Thyroid gland (tissue), 4 donors: ENCODE measurements at regions of chr20 and their contacts with region 1.

Region 1: DNA sequence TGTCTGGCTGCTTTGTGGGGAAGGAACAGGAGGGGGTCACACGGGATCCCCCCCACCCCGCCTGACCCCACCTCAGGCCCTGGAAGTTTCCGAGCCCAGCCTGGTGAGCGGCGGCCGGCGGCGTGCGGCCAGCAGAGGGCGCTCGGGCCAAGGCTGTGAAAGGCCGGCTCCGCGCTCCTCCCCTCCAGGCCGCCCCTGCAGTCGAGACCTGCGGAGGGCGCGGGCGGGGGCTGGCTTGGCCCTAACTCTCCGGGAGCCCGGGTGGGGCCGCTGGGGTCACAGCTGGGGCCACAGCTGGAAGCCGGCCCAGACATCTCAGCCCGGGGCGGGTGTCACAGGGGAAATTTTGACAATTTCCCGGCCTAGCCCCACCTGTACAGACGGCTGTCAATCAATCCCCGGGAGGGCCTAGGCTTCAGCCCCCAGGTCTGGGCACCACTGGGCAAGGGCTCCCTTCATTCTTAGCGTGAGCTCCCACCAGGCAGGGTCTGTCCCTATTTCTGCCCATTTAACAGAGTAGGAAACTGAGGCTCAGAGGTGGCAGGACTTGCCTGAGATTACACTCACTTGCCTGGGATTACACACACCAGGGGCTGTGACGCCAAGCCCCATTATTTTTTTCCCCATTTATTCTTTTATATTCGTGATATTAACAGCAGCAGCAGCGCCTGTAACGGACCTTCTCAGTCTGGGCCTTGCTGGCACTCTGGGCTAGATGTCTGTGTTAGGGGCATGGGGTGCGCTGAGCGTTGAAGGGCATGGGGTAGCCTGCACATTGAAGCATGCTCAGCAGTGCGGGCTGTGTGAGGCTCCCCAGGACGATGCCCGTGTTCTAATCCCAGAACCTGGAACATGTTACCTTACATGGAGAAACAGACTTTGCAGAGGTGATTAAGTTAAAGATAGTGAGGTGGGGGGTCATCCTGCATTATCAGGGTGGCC is 23.0 kb downstream of the ZBP1 start:
- DNase-seq: peak; percentile 63 to 68
- H3K4me3 ChIP-seq: no peak overlapping the region
- H3K27ac ChIP-seq: no peak overlapping the region
- H3K4me1 ChIP-seq: peaks cover 2 to 7% of the 10 kb centered on the region in 2 donors
- H3K27me3 ChIP-seq: no peaks in the 10 kb centered on the region
- CTCF ChIP-seq: peak; percentile 68 to 97 (median 88)
- POLR2A ChIP-seq: no peak

Region 2: GRCh38 chr20:58209652-58210397 is 612.6 kb after region 1 on chr20:
- intact Hi-C with region 1: loop called (anchors 5 kb)
- DNase-seq: peak; percentile 78 to 82
- H3K4me3 ChIP-seq: no peak overlapping the region
- H3K27ac ChIP-seq: no peak overlapping the region
- H3K4me1 ChIP-seq: no peaks in the 10 kb centered on the region
- H3K27me3 ChIP-seq: no peaks in the 10 kb centered on the region
- CTCF ChIP-seq: peak; percentile 98 to 100 (median 100)
- POLR2A ChIP-seq: no peak